Psoas muscle (tissue), 8 donors: ENCODE measurements at regions of chr4 and their contacts with region 1.

Region 1: GRCh38 chr4:21765810-21766407 is 182.7 kb downstream of the KCNIP4 start:
- DNase-seq: no peak
- ATAC-seq: peak in 1 of 4 donors; percentile 48
- H3K4me3 ChIP-seq: no peak overlapping the region
- H3K27ac ChIP-seq: no peak overlapping the region
- H3K4me1 ChIP-seq: no peaks in the 10 kb centered on the region
- H3K27me3 ChIP-seq: no peaks in the 10 kb centered on the region
- CTCF ChIP-seq: peak; percentile 70

Region 2: DNA sequence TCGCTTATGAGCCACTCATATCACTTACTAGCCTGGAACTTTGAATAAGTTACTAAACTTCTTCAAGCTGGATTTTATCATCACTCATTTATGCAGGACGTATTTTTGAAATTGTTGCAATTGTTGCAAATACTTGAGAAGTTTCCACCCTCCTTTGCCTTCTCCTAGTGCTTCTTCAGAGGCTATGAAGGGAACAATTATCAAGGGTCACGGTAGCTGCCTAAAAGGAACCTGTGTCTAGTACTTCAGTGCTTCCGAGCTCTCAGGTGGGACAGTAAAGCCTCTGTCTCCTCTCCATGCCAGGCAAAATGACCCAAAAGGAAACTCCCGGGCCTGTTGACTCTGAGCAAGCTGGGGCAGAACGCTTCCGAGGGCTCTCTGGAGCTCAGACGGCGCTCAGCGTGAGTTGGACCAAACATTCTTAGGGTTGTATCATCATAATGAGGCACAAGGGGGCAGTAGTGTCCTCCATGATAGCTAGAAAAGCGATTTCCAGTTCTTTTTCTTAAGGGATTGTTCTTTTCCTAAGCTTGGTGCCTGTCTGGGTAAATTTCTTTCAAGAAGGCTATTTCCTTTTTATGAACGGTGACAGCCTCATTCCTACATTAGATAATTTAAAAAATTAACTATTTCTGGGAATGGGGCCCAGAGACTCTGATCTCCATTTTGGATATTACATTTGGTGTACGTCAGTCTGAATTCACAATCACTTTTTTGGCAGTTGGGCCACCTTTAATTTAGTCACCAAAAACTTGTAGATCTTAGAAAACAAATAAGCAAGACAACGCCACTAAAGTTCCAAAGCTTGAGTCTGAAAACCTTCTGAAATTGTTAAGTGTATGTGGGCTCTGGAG is 992.5 kb before region 1 on chr4:
- intact Hi-C with region 1: loop called in 1 of 2 experiments (anchors 10 kb)
- DNase-seq: peak in 1 of 2 donors; percentile 12
- ATAC-seq: no peak
- H3K4me3 ChIP-seq: no peak overlapping the region
- H3K27ac ChIP-seq: no peak overlapping the region
- H3K4me1 ChIP-seq: no peaks in the 10 kb centered on the region
- H3K27me3 ChIP-seq: no peaks in the 10 kb centered on the region
- CTCF ChIP-seq: peak; percentile 35

Region 3: DNA sequence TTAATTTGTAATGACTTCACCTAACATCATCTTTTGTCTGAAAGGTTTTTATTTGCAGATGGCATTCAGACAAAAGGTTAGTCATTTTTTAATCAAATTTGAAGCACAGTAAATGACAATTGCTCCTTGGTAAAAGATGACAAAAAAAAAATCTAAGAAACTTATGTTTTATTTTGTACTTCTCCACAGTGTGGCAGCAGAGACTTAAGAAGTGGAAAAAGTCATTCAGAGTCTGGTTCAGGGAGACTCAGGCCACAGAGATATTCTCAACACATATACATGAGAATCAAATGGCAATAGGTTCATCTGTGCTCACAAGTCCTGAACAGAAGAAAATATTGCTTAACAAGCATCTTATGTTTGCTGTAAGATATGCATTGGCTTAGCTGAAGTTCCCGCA is 253.6 kb before region 1 on chr4:
- intact Hi-C with region 1: loop called (anchors 5 to 10 kb)
- DNase-seq: no peak
- ATAC-seq: no peak
- H3K4me3 ChIP-seq: no peak overlapping the region
- H3K27ac ChIP-seq: no peak overlapping the region
- H3K4me1 ChIP-seq: no peaks in the 10 kb centered on the region
- H3K27me3 ChIP-seq: no peaks in the 10 kb centered on the region
- CTCF ChIP-seq: no peak

Region 4: GRCh38 chr4:23224684-23225420 is 1458.9 kb after region 1 on chr4:
- intact Hi-C with region 1: no loop called
- DNase-seq: no peak
- ATAC-seq: no peak
- H3K4me3 ChIP-seq: no peak overlapping the region
- H3K27ac ChIP-seq: no peak overlapping the region
- H3K4me1 ChIP-seq: no peaks in the 10 kb centered on the region
- H3K27me3 ChIP-seq: no peaks in the 10 kb centered on the region
- CTCF ChIP-seq: no peak